GM12878 (cell line): ENCODE measurements at regions of chr12 and their contacts with region 1.

Region 1: GRCh38 chr12:121230538-121230907 is 20.6 kb downstream of the P2RX4 start:
- DNase-seq: no peak
- ATAC-seq: no peak
- H3K4me3 ChIP-seq: no peak overlapping the region
- H3K27ac ChIP-seq: no peak overlapping the region
- H3K4me1 ChIP-seq: peaks cover 13% of the 10 kb centered on the region
- H3K27me3 ChIP-seq: no peaks in the 10 kb centered on the region
- CTCF ChIP-seq: no peak
- EP300 ChIP-seq: no peak
- POLR2A ChIP-seq: no peak
- RAD21 ChIP-seq: no peak

Region 2: GRCh38 chr12:121240484-121241101 is 10.1 kb after region 1 on chr12:
- CTCF ChIA-PET with region 1: interaction called, 19 read pairs
- POLR2A ChIA-PET with region 1: no interaction called
- RAD21 ChIA-PET with region 1: no interaction called
- SMC1A ChIA-PET with region 1: interaction called, 5 read pairs
- in situ Hi-C with region 1: no loop called
- intact Hi-C with region 1: no loop called
- DNase-seq: no peak
- ATAC-seq: no peak
- H3K4me3 ChIP-seq: no peak overlapping the region
- H3K27ac ChIP-seq: 0 out of 2 replicates have a peak overlapping the region, but pooled peaks have one; percentile 31
- H3K4me1 ChIP-seq: peaks cover 14% of the 10 kb centered on the region
- H3K27me3 ChIP-seq: no peaks in the 10 kb centered on the region
- CTCF ChIP-seq: no peak
- EP300 ChIP-seq: no peak
- POLR2A ChIP-seq: peak; percentile 57; the same call in 1 of the 2 replicates
- RAD21 ChIP-seq: no peak

Region 3: DNA sequence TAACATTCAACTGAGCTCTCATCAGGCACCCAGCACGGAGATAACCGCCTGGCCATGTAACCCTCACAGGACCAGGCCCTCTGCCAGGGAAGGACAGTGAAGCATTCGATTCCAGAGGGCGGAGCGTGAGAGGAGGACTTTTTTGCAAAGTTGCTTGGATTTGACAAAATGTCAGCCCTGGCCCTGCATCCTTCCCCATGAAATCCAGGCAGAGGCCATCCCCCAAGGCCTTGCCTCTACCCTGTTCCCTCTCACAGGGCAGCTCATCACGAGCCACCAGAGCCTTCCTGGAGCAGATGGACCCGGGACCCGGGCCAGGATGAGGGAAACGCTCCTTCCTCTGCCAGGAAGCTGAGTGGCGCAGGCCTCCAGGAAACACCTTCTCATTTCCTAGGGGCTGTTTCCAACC is 49.0 kb after region 1 on chr12:
- CTCF ChIA-PET with region 1: no interaction called
- POLR2A ChIA-PET with region 1: no interaction called
- RAD21 ChIA-PET with region 1: no interaction called
- SMC1A ChIA-PET with region 1: no interaction called
- in situ Hi-C with region 1: no loop called
- intact Hi-C with region 1: no loop called
- DNase-seq: no peak
- ATAC-seq: no peak
- H3K4me3 ChIP-seq: no peak overlapping the region
- H3K27ac ChIP-seq: no peak overlapping the region
- H3K4me1 ChIP-seq: peaks cover 4% of the 10 kb centered on the region
- H3K27me3 ChIP-seq: no peaks in the 10 kb centered on the region
- CTCF ChIP-seq: no peak
- EP300 ChIP-seq: no peak
- POLR2A ChIP-seq: no peak
- RAD21 ChIP-seq: no peak

Region 4: DNA sequence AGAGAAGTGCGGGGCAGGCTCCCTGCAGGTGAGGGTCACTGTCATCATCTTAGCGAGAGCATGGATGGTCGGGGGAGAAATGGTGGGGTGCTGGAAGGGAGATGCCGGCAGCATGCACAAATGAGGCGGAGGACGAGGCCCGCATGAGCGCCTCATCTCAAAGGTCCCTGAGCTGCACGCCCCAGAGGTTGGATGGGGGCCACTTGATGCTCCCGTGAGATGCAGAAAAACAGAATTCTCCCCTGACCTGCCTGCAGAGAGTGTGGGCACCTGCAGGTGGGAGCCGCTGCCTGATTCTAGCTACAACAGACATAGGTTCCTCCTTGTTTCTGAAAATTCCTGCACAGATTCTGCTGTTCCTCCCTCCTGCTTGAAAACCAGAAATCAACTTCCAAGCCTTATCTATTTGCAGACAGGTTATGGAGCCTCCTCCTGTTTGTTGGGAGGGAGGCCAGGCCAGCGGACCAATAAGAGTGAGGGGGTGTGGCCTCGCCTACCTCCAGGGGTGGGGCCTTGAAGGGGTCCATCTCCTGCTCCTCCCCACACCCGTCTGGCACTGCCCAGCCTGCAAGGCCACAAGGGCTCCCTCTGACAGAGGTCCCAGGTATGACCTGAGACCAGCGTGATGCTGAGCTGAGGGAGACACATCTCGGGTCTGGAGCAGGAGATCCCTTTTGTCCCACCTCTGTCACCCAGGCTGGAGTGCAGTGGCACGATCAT is 283.1 kb after region 1 on chr12:
- CTCF ChIA-PET with region 1: no interaction called
- POLR2A ChIA-PET with region 1: no interaction called
- RAD21 ChIA-PET with region 1: no interaction called
- SMC1A ChIA-PET with region 1: no interaction called
- in situ Hi-C with region 1: no loop called
- intact Hi-C with region 1: no loop called
- DNase-seq: no peak
- ATAC-seq: peak; percentile 97
- H3K4me3 ChIP-seq: no peak overlapping the region
- H3K27ac ChIP-seq: peak overlapping the region; percentile 36
- H3K4me1 ChIP-seq: peaks cover 11% of the 10 kb centered on the region
- H3K27me3 ChIP-seq: no peaks in the 10 kb centered on the region
- CTCF ChIP-seq: no peak
- EP300 ChIP-seq: no peak
- POLR2A ChIP-seq: no peak
- RAD21 ChIP-seq: no peak